ENCODE measurements at regions of chrX and their contacts with region 1.

Region 1: GRCh38 chrX:65595460-65595876 is 60.9 kb upstream of the LAS1L start:
- DNase-seq: peak; percentile 86 to 95
- ATAC-seq: peak; percentile 81 to 97 (median 94)
- H3K4me3 ChIP-seq: no peak overlapping the region
- H3K27ac ChIP-seq: peak overlapping the region; percentile 45 to 90 (median 78)
- H3K4me1 ChIP-seq: peaks cover 0 to 37% (median 21%) of the 10 kb centered on the region in 9 donors
- H3K27me3 ChIP-seq: peaks cover 0 to 34% (median 0%) of the 10 kb centered on the region in 7 donors
- CTCF ChIP-seq: peak; percentile 75 to 99 (median 96)

Region 2: GRCh38 chrX:65635378-65635777 is 39.9 kb after region 1 on chrX:
- intact Hi-C with region 1: loop called in 5 of 10 experiments (anchors 5 kb)
- DNase-seq: peak in 1 of 2 donors; percentile 52
- ATAC-seq: peak; percentile 92 to 98 (median 96)
- H3K4me3 ChIP-seq: no peak overlapping the region
- H3K27ac ChIP-seq: peak overlapping the region; percentile 34 to 90 (median 78)
- H3K4me1 ChIP-seq: peaks cover 4 to 29% (median 17%) of the 10 kb centered on the region in 9 donors
- H3K27me3 ChIP-seq: peaks cover 0 to 16% (median 0%) of the 10 kb centered on the region in 7 donors
- CTCF ChIP-seq: no peak

Region 3: GRCh38 chrX:65667503-65668376 is 72.3 kb after region 1 on chrX and contains the start of gene MSN:
- intact Hi-C with region 1: loop called in 5 of 10 experiments (anchors 2 to 5 kb)
- DNase-seq: peak; percentile 79 to 84
- ATAC-seq: peak; percentile 86 to 95 (median 90)
- H3K4me3 ChIP-seq: peak within 1 kb of the TSS; percentile 53 to 89 (median 78)
- H3K27ac ChIP-seq: peak within 1 kb of the TSS; percentile 90 to 100 (median 97)
- H3K4me1 ChIP-seq: peaks cover 2 to 42% (median 32%) of the 10 kb centered on the region in 9 donors
- H3K27me3 ChIP-seq: peaks cover 0 to 13% (median 0%) of the 10 kb centered on the region in 7 donors
- CTCF ChIP-seq: peak in 3 of 9 donors; percentile 9 to 21 (median 14)
- total RNA-seq, gene MSN: 106 to 238 (median 120) TPM

Region 4: GRCh38 chrX:65688403-65688871 is 93.0 kb after region 1 on chrX:
- intact Hi-C with region 1: no loop called
- DNase-seq: no peak
- ATAC-seq: peak in 2 of 8 donors; percentile 6 to 20
- H3K4me3 ChIP-seq: no peak overlapping the region
- H3K27ac ChIP-seq: peak overlapping the region in 7 of 10 donors; percentile 9 to 66 (median 56)
- H3K4me1 ChIP-seq: peaks cover 3 to 100% (median 96%) of the 10 kb centered on the region in 9 donors
- H3K27me3 ChIP-seq: peaks cover 0 to 14% (median 0%) of the 10 kb centered on the region in 7 donors
- CTCF ChIP-seq: no peak

Region 5: GRCh38 chrX:65706041-65706828 is 110.8 kb after region 1 on chrX:
- intact Hi-C with region 1: loop called in 6 of 10 experiments (anchors 2 to 5 kb)
- DNase-seq: peak; percentile 22 to 59
- ATAC-seq: peak; percentile 47 to 93 (median 80)
- H3K4me3 ChIP-seq: no peak overlapping the region
- H3K27ac ChIP-seq: peak overlapping the region; percentile 58 to 85 (median 78)
- H3K4me1 ChIP-seq: peaks cover 2 to 87% (median 57%) of the 10 kb centered on the region in 9 donors
- H3K27me3 ChIP-seq: no peaks in the 10 kb centered on the region
- CTCF ChIP-seq: no peak

Region 6: GRCh38 chrX:65718538-65718937 is 123.1 kb after region 1 on chrX:
- intact Hi-C with region 1: loop called in 2 of 10 experiments (anchors 5 kb)
- DNase-seq: no peak
- ATAC-seq: peak in 1 of 8 donors; percentile 41
- H3K4me3 ChIP-seq: no peak overlapping the region
- H3K27ac ChIP-seq: no peak overlapping the region
- H3K4me1 ChIP-seq: peaks cover 0 to 95% (median 51%) of the 10 kb centered on the region in 9 donors
- H3K27me3 ChIP-seq: peaks cover 0 to 21% (median 0%) of the 10 kb centered on the region in 7 donors
- CTCF ChIP-seq: no peak

Region 7: GRCh38 chrX:65723706-65724105 is 128.2 kb after region 1 on chrX:
- intact Hi-C with region 1: loop called in 2 of 10 experiments (anchors 5 kb)
- DNase-seq: no peak
- ATAC-seq: peak in 3 of 8 donors; percentile 8 to 39 (median 18)
- H3K4me3 ChIP-seq: no peak overlapping the region
- H3K27ac ChIP-seq: peak overlapping the region in 6 of 10 donors; percentile 12 to 67 (median 36)
- H3K4me1 ChIP-seq: peaks cover 0 to 83% (median 38%) of the 10 kb centered on the region in 9 donors
- H3K27me3 ChIP-seq: peaks cover 0 to 5% (median 0%) of the 10 kb centered on the region in 7 donors
- CTCF ChIP-seq: no peak

Region 8: DNA sequence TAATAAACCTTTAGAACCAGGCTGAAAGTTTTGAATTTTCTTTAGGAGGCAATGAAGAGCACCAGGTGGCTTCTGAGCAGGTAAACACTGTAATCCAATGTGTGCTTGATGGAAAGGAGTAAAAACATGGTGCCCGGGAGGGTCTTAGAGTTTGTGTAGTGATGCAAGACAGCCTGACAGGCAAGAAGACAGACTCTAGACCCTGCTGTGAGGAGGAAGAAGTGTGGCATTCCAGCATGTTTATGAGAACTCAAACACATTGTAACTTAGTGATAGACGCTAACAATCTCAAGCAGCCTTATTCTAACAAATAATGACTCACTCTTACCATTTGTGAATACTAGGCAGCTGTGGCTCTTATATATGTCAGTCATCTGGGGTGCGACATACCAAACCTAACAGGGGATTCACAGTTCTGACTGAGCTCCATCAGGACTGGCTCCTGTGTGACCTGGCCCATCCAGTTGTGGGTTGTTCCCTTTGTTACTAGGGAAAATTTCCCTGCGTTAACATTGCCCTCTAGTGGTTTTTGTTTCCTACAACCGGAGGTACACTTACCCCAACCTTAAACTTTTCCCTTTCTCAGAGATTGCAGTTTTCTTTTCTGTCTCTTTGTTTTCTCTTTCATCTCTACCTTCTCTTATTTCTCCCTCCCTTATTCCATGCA is 390.6 kb after region 1 on chrX:
- intact Hi-C with region 1: loop called in 3 of 10 experiments (anchors 5 kb)
- DNase-seq: peak in 1 of 2 donors; percentile 46
- ATAC-seq: peak; percentile 78 to 89 (median 85)
- H3K4me3 ChIP-seq: no peak overlapping the region
- H3K27ac ChIP-seq: peak overlapping the region in 1 of 10 donors; percentile 72
- H3K4me1 ChIP-seq: peaks cover 0 to 28% (median 0%) of the 10 kb centered on the region in 9 donors
- H3K27me3 ChIP-seq: peaks cover 0 to 35% (median 0%) of the 10 kb centered on the region in 7 donors
- CTCF ChIP-seq: peak; percentile 30 to 69 (median 58)

Measured in heart right ventricle (tissue), 16 donors.